Posterior vena cava (tissue), 2 donors: ENCODE measurements at regions of chr1 and their contacts with region 1.

Region 1: GRCh38 chr1:247487057-247487456 is 29.2 kb upstream of the OR2B11 start:
- DNase-seq: no peak

Region 2: GRCh38 chr1:245961137-245961540 is 1525.9 kb before region 1 on chr1:
- intact Hi-C with region 1: no loop called
- DNase-seq: no peak

Region 3: DNA sequence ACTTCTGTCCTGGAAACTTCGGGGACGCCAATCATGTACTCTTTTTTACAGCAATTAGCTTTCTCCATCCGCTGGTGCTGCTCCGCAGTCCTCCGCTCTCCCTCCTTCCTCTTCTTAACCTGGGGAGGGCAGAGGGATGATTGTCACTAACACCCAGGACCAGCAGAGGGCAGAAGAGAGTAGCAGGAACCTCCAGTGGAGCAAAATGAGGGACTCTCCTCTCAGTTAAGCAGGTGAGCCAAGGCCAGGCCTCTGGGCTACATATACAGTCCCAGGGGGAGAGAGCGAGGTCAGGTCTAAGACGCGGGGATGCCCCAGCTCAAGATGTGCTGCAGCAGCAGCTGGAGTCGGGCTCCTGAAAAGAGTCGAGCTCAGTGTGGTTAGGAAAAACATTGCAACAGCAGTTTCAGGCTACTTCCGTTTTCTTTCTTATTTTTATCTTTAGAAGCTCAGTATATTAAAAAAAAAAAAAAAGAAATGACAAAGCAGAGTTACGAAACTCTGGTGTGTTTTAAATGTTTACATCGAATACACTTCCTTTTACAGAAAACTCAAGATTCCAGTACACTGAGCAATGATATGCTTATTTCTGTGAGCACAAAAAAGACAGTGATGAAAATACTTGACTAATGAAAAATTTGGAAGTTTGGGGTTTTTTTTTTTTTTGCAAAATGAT is 96.8 kb before region 1 on chr1:
- intact Hi-C with region 1: loop called (anchors 10 kb)
- DNase-seq: peak; percentile 89